Gastrocnemius medialis (tissue), 4 donors: ENCODE measurements at regions of chr20 and their contacts with region 1.

Region 1: GRCh38 chr20:16801919-16802911 is 54.1 kb downstream of the OTOR start:
- DNase-seq: peak; percentile 3 to 17
- ATAC-seq: no peak
- H3K4me3 ChIP-seq: no peak overlapping the region
- H3K27ac ChIP-seq: no peak overlapping the region
- H3K4me1 ChIP-seq: no peaks in the 10 kb centered on the region
- H3K27me3 ChIP-seq: peaks cover 3 to 12% (median 7%) of the 10 kb centered on the region in 3 donors
- CTCF ChIP-seq: peak in 4 of 5 experiments; percentile 40 to 74 (median 64)
- POLR2A ChIP-seq: no peak

Region 2: GRCh38 chr20:17421493-17421892 is 619.3 kb after region 1 on chr20:
- in situ Hi-C with region 1: loop called in 3 of 4 experiments (anchors 5 to 10 kb)
- intact Hi-C with region 1: no loop called
- DNase-seq: no peak
- ATAC-seq: no peak
- H3K4me3 ChIP-seq: no peak overlapping the region
- H3K27ac ChIP-seq: no peak overlapping the region
- H3K4me1 ChIP-seq: no peaks in the 10 kb centered on the region
- H3K27me3 ChIP-seq: no peaks in the 10 kb centered on the region
- CTCF ChIP-seq: no peak
- POLR2A ChIP-seq: no peak

Region 3: GRCh38 chr20:17431621-17432364 is 629.6 kb after region 1 on chr20:
- in situ Hi-C with region 1: loop called (anchors 5 to 10 kb)
- intact Hi-C with region 1: loop called (anchors 1 kb)
- DNase-seq: no peak
- ATAC-seq: peak in 1 of 2 donors; percentile 24
- H3K4me3 ChIP-seq: no peak overlapping the region
- H3K27ac ChIP-seq: no peak overlapping the region
- H3K4me1 ChIP-seq: no peaks in the 10 kb centered on the region
- H3K27me3 ChIP-seq: peaks cover 0 to 3% (median 0%) of the 10 kb centered on the region in 3 donors
- CTCF ChIP-seq: peak; percentile 56 to 87 (median 67)
- POLR2A ChIP-seq: no peak